Mammary epithelial cell (primary cell): ENCODE measurements at regions of chr17 and their contacts with region 1.

Region 1: DNA sequence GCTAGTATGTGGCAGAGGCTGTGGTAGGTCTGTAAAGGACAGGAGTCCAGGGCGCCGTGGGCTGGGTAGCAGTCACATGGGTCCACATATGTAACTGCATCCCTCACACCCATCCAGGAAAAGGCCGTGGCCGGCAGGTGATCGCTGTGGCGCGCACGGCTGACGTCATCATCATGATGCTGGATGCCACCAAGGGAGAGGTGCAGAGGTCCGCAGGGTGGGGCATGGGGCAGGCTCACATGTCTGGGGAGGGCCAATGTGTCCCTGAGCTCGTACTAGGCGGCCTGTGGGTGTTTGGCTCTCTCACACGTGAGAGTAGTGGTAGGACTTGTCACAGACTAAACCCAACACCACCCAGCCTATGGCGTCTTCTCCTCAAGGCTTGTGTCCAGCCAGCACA is 9.0 kb upstream of the MYO15A start:
- DNase-seq: no peak
- H3K4me3 ChIP-seq: no peak overlapping the region
- H3K27ac ChIP-seq: no peak overlapping the region
- H3K4me1 ChIP-seq: no peaks in the 10 kb centered on the region
- H3K27me3 ChIP-seq: no peaks in the 10 kb centered on the region
- CTCF ChIP-seq: no peak

Region 2: DNA sequence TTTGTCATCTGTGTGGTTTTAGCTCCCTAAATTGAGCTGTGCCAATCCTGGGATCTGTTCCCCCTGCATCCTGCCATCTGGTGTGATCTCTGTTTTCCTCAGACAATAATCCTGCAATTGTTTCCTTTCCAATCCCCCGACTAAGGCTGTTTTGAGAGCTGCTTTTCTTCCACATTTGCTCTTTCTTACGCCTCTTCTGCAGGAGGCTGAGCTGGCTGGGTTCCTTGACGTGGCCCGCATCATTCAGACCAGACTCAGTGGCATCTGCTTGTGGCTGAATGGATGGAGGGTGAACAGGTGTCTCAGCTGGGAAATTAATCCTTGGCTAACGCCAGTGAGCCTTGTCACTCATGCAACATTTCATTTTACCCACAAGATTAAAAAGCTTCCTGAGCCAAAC is 632.5 kb before region 1 on chr17:
- CTCF ChIA-PET with region 1: no interaction called
- dilution Hi-C with region 1: no loop called
- in situ Hi-C with region 1: no loop called
- intact Hi-C with region 1: no loop called
- DNase-seq: no peak
- H3K4me3 ChIP-seq: no peak overlapping the region
- H3K27ac ChIP-seq: no peak overlapping the region
- H3K4me1 ChIP-seq: peaks cover under 1% of the 10 kb centered on the region
- H3K27me3 ChIP-seq: no peaks in the 10 kb centered on the region
- CTCF ChIP-seq: no peak

Region 3: GRCh38 chr17:18056212-18056611 is 43.3 kb before region 1 on chr17:
- CTCF ChIA-PET with region 1: no interaction called
- dilution Hi-C with region 1: no loop called
- in situ Hi-C with region 1: no loop called
- intact Hi-C with region 1: no loop called
- DNase-seq: no peak
- H3K4me3 ChIP-seq: no peak overlapping the region
- H3K27ac ChIP-seq: no peak overlapping the region
- H3K4me1 ChIP-seq: peaks cover 12% of the 10 kb centered on the region
- H3K27me3 ChIP-seq: no peaks in the 10 kb centered on the region
- CTCF ChIP-seq: no peak

Region 4: GRCh38 chr17:18129041-18129502 is 29.6 kb after region 1 on chr17:
- CTCF ChIA-PET with region 1: no interaction called
- dilution Hi-C with region 1: no loop called
- in situ Hi-C with region 1: no loop called
- intact Hi-C with region 1: no loop called
- DNase-seq: peak; percentile 71
- H3K4me3 ChIP-seq: no peak overlapping the region
- H3K27ac ChIP-seq: no peak overlapping the region
- H3K4me1 ChIP-seq: no peaks in the 10 kb centered on the region
- H3K27me3 ChIP-seq: no peaks in the 10 kb centered on the region
- CTCF ChIP-seq: no peak

Region 5: DNA sequence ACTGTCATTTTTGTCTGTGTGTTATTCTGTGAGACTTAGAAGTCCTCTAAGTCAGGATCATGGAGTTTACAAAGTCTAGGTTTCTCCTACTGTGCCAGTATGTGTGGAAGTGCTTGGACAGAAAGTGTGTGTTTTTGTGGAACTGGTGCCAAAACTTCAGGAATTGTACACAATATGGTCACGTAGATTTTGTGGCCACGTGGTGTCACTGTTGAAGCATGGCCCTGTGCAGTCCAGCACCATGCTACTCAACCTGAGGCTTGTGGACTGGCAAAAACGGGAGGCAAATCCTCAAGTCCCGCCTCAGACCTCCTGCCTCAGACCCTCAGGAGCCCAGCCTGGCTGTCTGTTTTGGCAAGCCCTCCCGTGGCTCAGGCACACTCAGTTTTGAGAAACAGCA is 67.4 kb after region 1 on chr17:
- CTCF ChIA-PET with region 1: no interaction called
- dilution Hi-C with region 1: loop called (anchors 5 kb)
- in situ Hi-C with region 1: no loop called
- intact Hi-C with region 1: no loop called
- DNase-seq: no peak
- H3K4me3 ChIP-seq: no peak overlapping the region
- H3K27ac ChIP-seq: no peak overlapping the region
- H3K4me1 ChIP-seq: no peaks in the 10 kb centered on the region
- H3K27me3 ChIP-seq: no peaks in the 10 kb centered on the region
- CTCF ChIP-seq: peak in 1 of 2 donors; percentile 3

Region 6: GRCh38 chr17:18203308-18203707 is 103.8 kb after region 1 on chr17:
- CTCF ChIA-PET with region 1: no interaction called
- dilution Hi-C with region 1: loop called (anchors 5 kb)
- in situ Hi-C with region 1: no loop called
- intact Hi-C with region 1: no loop called
- DNase-seq: no peak
- H3K4me3 ChIP-seq: no peak overlapping the region
- H3K27ac ChIP-seq: no peak overlapping the region
- H3K4me1 ChIP-seq: peaks cover 4% of the 10 kb centered on the region
- H3K27me3 ChIP-seq: no peaks in the 10 kb centered on the region
- CTCF ChIP-seq: no peak